A549 (cell line): ENCODE measurements at regions of chr5 and their contacts with region 1.

Region 1: DNA sequence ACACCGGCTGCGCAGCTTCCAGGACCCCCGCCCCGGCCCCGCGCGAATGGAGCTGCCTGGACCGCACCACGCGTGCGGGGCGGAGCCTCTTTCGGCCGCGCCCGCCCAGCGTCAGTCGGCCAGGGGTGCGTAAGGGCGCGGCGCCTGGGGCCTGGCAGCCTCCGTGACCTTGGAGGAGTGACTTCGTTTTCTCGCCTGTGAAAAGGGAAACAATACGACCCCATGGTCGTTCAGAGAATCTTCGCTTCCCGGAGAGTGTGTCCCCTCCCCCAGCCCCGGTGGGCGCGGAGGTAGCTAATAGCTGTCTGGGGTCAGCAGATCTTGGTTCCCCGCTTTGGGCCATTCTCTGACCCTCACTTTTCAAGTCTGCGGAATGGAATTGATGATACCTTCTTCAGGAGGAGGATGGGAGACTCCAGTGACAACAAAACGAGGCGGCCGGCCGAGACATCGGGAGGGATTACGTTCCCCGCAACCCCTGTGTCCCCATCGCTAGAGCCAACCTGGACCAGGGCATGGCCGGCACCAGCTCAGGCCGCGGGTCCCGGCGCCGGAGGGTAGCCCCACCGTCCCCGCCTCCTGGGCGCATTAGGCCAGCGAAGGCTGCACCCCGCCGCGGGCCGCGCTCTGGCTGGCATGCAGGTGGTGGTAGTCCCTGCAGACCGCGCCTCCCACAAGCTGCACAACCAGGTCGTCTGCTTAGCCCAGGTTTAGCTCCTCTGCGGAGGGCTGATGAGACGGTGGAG is 5.5 kb upstream of the CDHR2 start:
- DNase-seq: peak; percentile 53 to 73
- ATAC-seq: peak; percentile 77 to 86
- H3K4me3 ChIP-seq: peak overlapping the region; percentile 66
- H3K27ac ChIP-seq: peak overlapping the region; percentile 89 to 95
- H3K4me1 ChIP-seq: peaks cover 51% of the 10 kb centered on the region
- CTCF ChIP-seq: no peak
- EP300 ChIP-seq: no peak
- POLR2A ChIP-seq: peak; percentile 78
- RAD21 ChIP-seq: no peak

Region 2: DNA sequence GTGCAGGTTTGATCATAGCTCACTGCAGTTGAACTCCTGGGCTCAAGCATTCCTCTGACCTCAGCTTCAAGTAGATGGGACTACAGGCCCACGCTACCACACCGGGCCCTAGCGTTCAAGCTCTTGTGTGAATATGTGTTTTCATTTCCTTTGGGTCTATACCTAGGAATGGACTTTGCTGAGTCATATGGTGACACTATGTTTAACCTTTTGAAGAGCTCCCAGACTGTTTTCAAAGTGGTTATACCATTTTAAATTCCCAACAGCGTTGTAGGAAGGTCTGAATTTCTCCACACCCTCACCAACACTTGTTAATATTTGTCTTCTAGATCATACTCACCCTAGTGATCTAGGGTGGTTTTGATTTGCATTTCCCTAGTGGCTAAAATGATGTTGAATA is 61.9 kb before region 1 on chr5:
- CTCF ChIA-PET with region 1: interaction called, 10 read pairs
- POLR2A ChIA-PET with region 1: no interaction called
- DNase-seq: peak in 1 of 2 experiments; percentile 79
- ATAC-seq: peak; percentile 64 to 85; a peak in 4 of 6 replicates
- H3K4me3 ChIP-seq: no peak overlapping the region
- H3K27ac ChIP-seq: peak overlapping the region; percentile 28 to 57; a peak in 5 of 6 replicates
- H3K4me1 ChIP-seq: peaks cover 12% of the 10 kb centered on the region
- CTCF ChIP-seq: no peak
- EP300 ChIP-seq: no peak
- POLR2A ChIP-seq: no peak
- RAD21 ChIP-seq: no peak

Region 3: DNA sequence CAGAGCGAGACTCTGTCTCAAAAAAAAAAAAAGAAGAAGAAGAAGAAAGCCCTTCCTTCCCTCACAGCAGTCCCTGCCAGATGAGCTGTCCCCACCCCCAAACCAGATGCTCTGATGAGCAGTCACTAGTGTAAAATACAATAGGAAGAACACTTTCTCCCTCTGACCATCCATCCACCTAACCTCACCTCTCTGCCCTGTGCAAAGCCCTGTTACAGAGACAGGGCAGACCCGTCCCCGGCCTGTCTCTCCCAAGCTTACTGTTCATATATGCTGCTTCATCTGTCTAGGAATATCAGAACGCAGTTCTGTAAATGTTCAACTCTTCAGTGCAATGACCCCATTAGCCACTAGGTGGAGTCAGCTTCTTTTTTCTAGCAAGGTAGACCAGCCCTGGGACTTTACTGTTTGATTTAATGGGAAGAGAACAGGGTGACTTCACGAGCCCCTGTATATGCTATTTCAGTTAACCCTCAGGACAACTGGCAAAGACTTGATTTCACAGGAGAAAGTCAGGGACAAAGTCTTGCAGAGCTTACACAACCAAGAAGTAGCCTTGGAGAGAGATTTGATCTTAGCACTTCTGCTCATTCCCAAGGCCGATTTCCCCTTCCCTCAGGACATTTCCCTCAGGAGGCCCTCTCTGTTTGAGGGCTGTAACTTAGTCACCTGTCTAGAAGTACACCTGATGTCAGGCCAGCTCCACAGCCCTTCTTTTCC is 528.2 kb after region 1 on chr5:
- CTCF ChIA-PET with region 1: no interaction called
- POLR2A ChIA-PET with region 1: no interaction called
- DNase-seq: peak; percentile 79 to 82
- ATAC-seq: peak; percentile 89 to 95
- H3K4me3 ChIP-seq: no peak overlapping the region
- H3K27ac ChIP-seq: no peak overlapping the region
- H3K4me1 ChIP-seq: peaks cover 7% of the 10 kb centered on the region; the same call in 1 of the 3 replicates
- CTCF ChIP-seq: peak; percentile 83
- EP300 ChIP-seq: no peak
- POLR2A ChIP-seq: no peak
- RAD21 ChIP-seq: peak; percentile 71 to 74